MCF 10A (cell line): ENCODE measurements at regions of chr1 and their contacts with region 1.

Region 1: DNA sequence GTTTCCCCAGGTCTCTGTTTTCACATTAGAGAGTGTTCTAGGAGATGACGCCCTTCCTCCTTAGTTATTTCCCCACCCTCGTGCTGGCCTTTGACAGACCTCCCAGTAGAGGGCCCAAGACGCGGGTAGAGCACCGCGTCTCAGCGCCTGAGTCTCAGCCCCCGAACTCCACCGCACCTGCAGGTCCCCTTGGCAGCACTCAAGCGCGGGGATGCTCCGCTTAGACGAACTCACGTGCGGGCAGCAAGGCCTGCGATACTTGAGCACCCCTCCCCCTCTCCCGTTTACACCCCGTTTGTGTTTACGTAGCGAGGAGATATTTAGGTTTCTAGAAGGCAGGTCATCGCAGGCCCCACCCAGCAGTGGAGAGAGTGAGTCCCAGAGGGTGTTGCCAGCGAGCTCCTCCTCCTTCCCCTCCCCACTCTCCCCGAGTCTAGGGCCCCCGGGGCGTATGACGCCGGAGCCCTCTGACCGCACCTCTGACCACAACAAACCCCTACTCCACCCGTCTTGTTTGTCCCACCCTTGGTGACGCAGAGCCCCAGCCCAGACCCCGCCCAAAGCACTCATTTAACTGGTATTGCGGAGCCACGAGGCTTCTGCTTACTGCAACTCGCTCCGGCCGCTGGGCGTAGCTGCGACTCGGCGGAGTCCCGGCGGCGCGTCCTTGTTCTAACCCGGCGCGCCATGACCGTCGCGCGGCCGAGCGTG is at the start of gene CD55:
- DNase-seq: peak; percentile 100
- H3K4me3 Mint-ChIP-seq: peak within 1 kb of the TSS; percentile 71
- H3K27ac Mint-ChIP-seq: peak within 1 kb of the TSS; percentile 93
- H3K4me1 Mint-ChIP-seq: peaks cover 41% of the 10 kb centered on the region
- H3K27me3 Mint-ChIP-seq: no peaks in the 10 kb centered on the region
- CTCF ChIP-seq: peak; percentile 22
- total RNA-seq, gene CD55: 159 and 213 TPM in 2 replicates

Region 2: DNA sequence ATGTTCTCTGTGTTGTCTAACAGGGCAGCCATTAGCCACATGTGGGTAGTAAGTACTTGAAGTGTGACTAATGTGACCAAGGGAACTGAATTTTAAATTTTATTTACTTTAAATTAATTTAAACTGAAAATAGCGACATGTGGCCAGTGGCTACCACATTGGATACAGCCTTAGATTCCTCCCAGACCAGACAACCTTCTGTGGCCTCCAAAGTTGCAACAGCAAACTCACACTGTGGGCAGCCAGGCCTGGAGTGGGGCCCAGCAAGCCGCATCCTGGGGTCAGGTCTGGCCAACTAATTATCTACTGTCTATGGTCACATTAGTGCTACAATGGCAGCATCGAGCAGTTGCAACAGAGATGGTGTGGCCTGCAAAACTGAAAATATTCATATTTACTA is 720.7 kb before region 1 on chr1:
- CTCF ChIA-PET with region 1: no interaction called
- POLR2A ChIA-PET with region 1: no interaction called
- intact Hi-C with region 1: no loop called
- DNase-seq: no peak
- H3K4me3 Mint-ChIP-seq: no peak overlapping the region
- H3K27ac Mint-ChIP-seq: no peak overlapping the region
- H3K4me1 Mint-ChIP-seq: no peaks in the 10 kb centered on the region
- H3K27me3 Mint-ChIP-seq: no peaks in the 10 kb centered on the region
- CTCF ChIP-seq: no peak

Region 3: DNA sequence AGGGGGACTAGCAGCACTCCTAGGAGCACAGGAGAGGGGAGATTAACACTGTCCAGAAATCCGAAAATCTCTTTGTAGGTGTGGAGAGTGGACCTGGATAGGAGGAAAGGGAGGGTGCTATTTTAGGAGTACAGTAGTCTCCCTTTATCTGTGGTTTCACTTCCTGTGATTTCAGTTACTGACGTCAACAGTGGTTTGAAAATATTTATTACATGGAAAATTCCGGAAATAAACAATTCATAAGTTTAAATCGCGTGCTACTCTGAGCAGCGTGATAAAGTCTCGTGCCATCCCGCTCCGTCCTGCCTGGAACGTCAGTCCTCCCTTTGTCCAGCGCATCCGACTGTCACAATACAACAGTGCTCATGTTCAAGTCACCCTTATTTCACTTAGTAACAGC is 430.5 kb before region 1 on chr1:
- CTCF ChIA-PET with region 1: no interaction called
- POLR2A ChIA-PET with region 1: no interaction called
- intact Hi-C with region 1: loop called (anchors 10 kb)
- DNase-seq: peak; percentile 96
- H3K4me3 Mint-ChIP-seq: peak overlapping the region; percentile 45
- H3K27ac Mint-ChIP-seq: peak overlapping the region; percentile 95
- H3K4me1 Mint-ChIP-seq: peaks cover 91% of the 10 kb centered on the region
- H3K27me3 Mint-ChIP-seq: no peaks in the 10 kb centered on the region
- CTCF ChIP-seq: no peak

Region 4: GRCh38 chr1:207052911-207053769 is 268.1 kb before region 1 on chr1 and contains the start of gene PFKFB2:
- CTCF ChIA-PET with region 1: interaction called, 8 read pairs
- POLR2A ChIA-PET with region 1: interaction called, 26 read pairs
- intact Hi-C with region 1: no loop called
- DNase-seq: peak; percentile 100
- H3K4me3 Mint-ChIP-seq: peak within 1 kb of the TSS; percentile 89
- H3K27ac Mint-ChIP-seq: peak within 1 kb of the TSS; percentile 95
- H3K4me1 Mint-ChIP-seq: peaks cover 51% of the 10 kb centered on the region
- H3K27me3 Mint-ChIP-seq: no peaks in the 10 kb centered on the region
- CTCF ChIP-seq: peak; percentile 24
- total RNA-seq, gene PFKFB2: 21.1 and 22.0 TPM in 2 replicates

Region 5: DNA sequence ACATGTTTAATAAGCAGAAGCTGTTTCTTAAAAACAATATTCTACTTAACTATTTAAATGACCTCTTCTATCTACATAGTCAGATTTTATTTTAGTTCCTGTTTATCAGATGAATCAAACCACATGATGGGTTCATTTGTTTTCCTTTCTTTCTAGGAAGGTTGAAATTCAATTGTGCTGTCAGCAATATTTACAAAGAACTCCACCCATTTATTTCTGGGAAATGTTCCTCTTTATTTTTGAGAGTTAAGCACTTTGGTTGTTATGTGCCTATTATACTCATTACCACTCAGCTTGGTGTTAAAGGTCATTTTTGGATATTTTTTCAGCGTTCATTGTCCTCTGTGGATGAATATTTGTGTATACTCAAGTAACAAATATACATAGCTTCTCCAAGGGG is 132.3 kb before region 1 on chr1:
- CTCF ChIA-PET with region 1: interaction called, 4 read pairs
- POLR2A ChIA-PET with region 1: interaction called, 13 read pairs
- intact Hi-C with region 1: no loop called
- DNase-seq: no peak
- H3K4me3 Mint-ChIP-seq: no peak overlapping the region
- H3K27ac Mint-ChIP-seq: no peak overlapping the region
- H3K4me1 Mint-ChIP-seq: no peaks in the 10 kb centered on the region
- H3K27me3 Mint-ChIP-seq: no peaks in the 10 kb centered on the region
- CTCF ChIP-seq: no peak

Region 6: DNA sequence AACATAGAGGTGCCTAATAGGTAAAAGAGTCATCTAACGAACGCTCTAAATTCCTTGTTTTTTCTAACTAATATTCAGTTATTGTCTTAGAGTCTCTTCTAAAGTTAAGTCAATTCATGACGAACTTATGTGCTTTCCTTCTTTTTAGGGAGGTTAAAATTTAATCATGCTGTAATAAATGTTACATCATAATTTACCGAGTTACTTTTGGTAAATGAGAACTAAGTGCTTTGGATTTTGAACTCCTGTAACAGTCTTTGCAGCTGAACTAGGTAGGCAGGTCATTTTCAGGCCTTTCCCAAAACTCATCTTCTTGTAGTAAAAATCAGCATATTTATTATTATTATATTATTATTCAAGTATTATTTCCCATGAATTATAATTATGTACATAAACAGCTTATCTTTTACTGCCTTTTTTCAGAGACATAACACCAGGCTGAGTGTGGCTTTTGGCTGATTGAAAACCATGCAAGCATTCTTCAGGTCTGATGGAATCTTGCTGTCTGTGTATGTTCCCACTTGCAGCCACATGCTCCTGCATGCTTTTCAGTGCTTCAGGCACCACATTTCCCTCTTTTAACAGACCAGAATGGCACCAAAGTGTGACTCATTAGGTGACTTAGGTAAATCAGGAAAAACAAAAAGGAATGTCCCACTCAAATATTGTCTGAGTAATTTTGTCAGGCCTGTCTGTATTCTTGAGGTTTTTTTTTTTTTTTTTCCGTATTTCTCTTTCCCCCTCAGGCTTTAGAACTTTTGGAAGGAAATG is 80.7 kb before region 1 on chr1:
- CTCF ChIA-PET with region 1: interaction called, 5 read pairs
- POLR2A ChIA-PET with region 1: interaction called, 32 read pairs
- intact Hi-C with region 1: no loop called
- DNase-seq: peak; percentile 94
- H3K4me3 Mint-ChIP-seq: peak overlapping the region; percentile 3
- H3K27ac Mint-ChIP-seq: peak overlapping the region; percentile 71
- H3K4me1 Mint-ChIP-seq: peaks cover 28% of the 10 kb centered on the region
- H3K27me3 Mint-ChIP-seq: no peaks in the 10 kb centered on the region
- CTCF ChIP-seq: no peak

Region 7: GRCh38 chr1:207336559-207337467 is 15.6 kb after region 1 on chr1:
- CTCF ChIA-PET with region 1: interaction called, 18 read pairs
- POLR2A ChIA-PET with region 1: interaction called, 101 read pairs
- intact Hi-C with region 1: no loop called
- DNase-seq: peak; percentile 39
- H3K4me3 Mint-ChIP-seq: no peak overlapping the region
- H3K27ac Mint-ChIP-seq: peak overlapping the region; percentile 21
- H3K4me1 Mint-ChIP-seq: peaks cover 22% of the 10 kb centered on the region
- H3K27me3 Mint-ChIP-seq: no peaks in the 10 kb centered on the region
- CTCF ChIP-seq: no peak

Region 8: DNA sequence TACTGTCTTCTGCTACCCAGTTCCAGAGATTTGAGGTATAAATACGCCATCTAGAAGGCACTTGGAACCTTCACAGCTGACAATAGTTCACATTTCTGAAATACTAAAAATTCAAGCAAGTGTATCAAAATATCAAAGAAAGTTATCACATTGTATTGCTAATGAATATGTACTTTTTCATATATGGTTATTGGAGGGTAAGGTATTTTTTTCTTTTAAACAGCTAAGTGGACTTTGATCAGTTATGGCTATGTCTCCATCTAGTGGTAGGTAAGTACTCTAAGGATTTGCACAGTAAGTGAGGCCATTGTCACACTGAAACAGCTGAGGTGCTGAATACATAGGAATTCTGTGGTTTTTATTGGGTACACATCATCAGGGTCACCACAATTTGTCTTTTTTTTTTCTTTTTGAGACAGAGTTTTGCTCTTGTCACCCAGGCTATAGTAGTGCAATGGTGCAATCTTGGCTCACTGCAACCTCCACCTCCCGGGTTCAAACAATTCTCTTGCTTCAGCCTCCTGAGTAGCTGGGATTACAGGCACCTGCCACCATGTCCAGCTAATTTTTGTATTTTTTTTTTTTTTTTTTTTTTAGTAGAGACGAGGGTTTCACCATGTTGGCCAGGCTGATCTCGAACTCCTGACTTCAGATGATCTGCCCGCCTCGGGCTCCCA is 83.8 kb after region 1 on chr1:
- CTCF ChIA-PET with region 1: interaction called, 16 read pairs
- POLR2A ChIA-PET with region 1: interaction called, 10 read pairs
- intact Hi-C with region 1: loop called (anchors 1 kb)
- DNase-seq: peak; percentile 83
- H3K4me3 Mint-ChIP-seq: no peak overlapping the region
- H3K27ac Mint-ChIP-seq: no peak overlapping the region
- H3K4me1 Mint-ChIP-seq: peaks cover 5% of the 10 kb centered on the region
- H3K27me3 Mint-ChIP-seq: no peaks in the 10 kb centered on the region
- CTCF ChIP-seq: peak; percentile 99

Region 9: GRCh38 chr1:207619871-207620542 is 298.8 kb after region 1 on chr1:
- CTCF ChIA-PET with region 1: no interaction called
- POLR2A ChIA-PET with region 1: no interaction called
- intact Hi-C with region 1: no loop called
- DNase-seq: peak; percentile 73
- H3K4me3 Mint-ChIP-seq: no peak overlapping the region
- H3K27ac Mint-ChIP-seq: no peak overlapping the region
- H3K4me1 Mint-ChIP-seq: no peaks in the 10 kb centered on the region
- H3K27me3 Mint-ChIP-seq: peaks cover 27% of the 10 kb centered on the region
- CTCF ChIP-seq: peak; percentile 75